Transverse colon (tissue), 4 donors: ENCODE measurements at regions of chr12 and their contacts with region 1.

Region 1: GRCh38 chr12:126874427-126875026 is 1392.4 kb upstream of the TMEM132C start:
- DNase-seq: peak; percentile 62
- H3K4me3 ChIP-seq: no peak overlapping the region
- H3K27ac ChIP-seq: no peak overlapping the region
- H3K4me1 ChIP-seq: no peaks in the 10 kb centered on the region
- H3K27me3 ChIP-seq: no peaks in the 10 kb centered on the region
- CTCF ChIP-seq: peak; percentile 78 to 91 (median 90)
- EP300 ChIP-seq: no peak
- POLR2A ChIP-seq: no peak

Region 2: GRCh38 chr12:125183187-125184067 is 1691.1 kb before region 1 on chr12:
- in situ Hi-C with region 1: no loop called
- intact Hi-C with region 1: loop called (anchors 10 kb)
- DNase-seq: peak; percentile 80
- H3K4me3 ChIP-seq: no peak overlapping the region
- H3K27ac ChIP-seq: no peak overlapping the region
- H3K4me1 ChIP-seq: peaks cover 10 to 28% (median 18%) of the 10 kb centered on the region in 4 donors
- H3K27me3 ChIP-seq: peaks cover 67% of the 10 kb centered on the region
- CTCF ChIP-seq: peak; percentile 96 to 100 (median 99)
- EP300 ChIP-seq: no peak
- POLR2A ChIP-seq: no peak